ENCODE measurements at regions of chr14 and their contacts with region 1.

Region 1: DNA sequence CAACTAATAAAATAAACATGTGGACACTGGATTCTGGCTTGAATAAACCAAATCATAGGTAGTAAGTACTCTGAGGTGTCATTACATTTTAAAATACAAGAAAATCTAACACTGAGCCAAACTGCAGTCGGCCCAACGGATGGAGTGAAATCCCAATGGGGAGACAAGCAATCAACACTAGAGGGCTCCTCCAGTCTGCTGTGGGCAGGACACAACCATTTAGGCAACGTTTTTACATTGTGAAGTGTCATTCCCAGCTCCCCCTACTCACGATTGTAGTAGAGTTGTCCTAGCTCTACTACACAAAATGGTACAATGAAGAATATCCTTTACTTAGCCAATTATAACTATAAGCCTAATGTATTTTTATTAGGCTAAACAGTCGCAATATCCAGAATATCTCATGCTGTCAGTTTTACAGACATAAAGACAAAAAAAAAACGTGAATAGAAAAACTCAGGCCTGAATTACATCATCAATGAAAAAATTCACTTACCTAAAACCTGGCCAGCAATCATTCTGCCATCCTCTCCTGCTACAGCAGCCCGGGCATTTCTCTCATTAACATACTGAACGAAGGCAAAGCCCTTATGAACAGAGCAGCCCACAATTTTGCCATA is 35.7 kb downstream of the HNRNPC start:
- DNase-seq: no peak
- ATAC-seq: peak; percentile 49; the same call in 1 of the 2 replicates
- H3K4me3 ChIP-seq: no peak overlapping the region
- H3K27ac ChIP-seq: no peak overlapping the region
- H3K4me1 ChIP-seq: no peaks in the 10 kb centered on the region
- H3K27me3 ChIP-seq: no peaks in the 10 kb centered on the region
- CTCF ChIP-seq: peak in 2 of 3 experiments; percentile 32 to 33; a peak in 2 of 6 replicates
- POLR2A ChIP-seq: no peak
- RAD21 ChIP-seq: no peak

Region 2: GRCh38 chr14:20652996-20653975 is 580.3 kb before region 1 on chr14:
- CTCF ChIA-PET with region 1: no interaction called
- POLR2A ChIA-PET with region 1: no interaction called
- RAD21 ChIA-PET with region 1: no interaction called
- intact Hi-C with region 1: no loop called
- DNase-seq: peak; percentile 91
- ATAC-seq: peak; percentile 63
- H3K4me3 ChIP-seq: peak overlapping the region; percentile 38 to 42
- H3K27ac ChIP-seq: no peak overlapping the region
- H3K4me1 ChIP-seq: peaks cover 6 to 29% of the 10 kb centered on the region in 2 experiments
- H3K27me3 ChIP-seq: no peaks in the 10 kb centered on the region
- CTCF ChIP-seq: no peak
- POLR2A ChIP-seq: no peak
- RAD21 ChIP-seq: no peak

Region 3: DNA sequence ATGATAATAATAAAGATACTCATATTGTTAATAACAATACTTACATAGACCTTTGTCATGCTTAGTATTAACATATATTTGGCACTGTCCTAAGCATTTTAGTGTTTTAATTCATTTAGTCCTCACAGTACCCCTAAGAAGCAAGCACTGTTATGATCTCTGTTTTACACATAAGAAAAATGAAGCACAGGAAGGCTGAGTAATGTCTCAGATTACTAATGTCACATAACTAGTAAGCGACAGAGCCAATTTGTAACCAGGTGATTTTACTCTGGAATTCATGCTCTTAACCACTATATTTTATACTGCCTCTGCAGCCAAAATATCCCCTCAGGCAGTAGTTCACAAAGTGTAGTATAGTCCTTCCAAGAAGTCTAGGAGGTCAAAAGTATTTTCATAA is 112.5 kb before region 1 on chr14:
- CTCF ChIA-PET with region 1: no interaction called
- POLR2A ChIA-PET with region 1: no interaction called
- RAD21 ChIA-PET with region 1: no interaction called
- intact Hi-C with region 1: no loop called
- DNase-seq: no peak
- ATAC-seq: no peak
- H3K4me3 ChIP-seq: no peak overlapping the region
- H3K27ac ChIP-seq: no peak overlapping the region
- H3K4me1 ChIP-seq: no peaks in the 10 kb centered on the region
- H3K27me3 ChIP-seq: no peaks in the 10 kb centered on the region
- CTCF ChIP-seq: no peak
- POLR2A ChIP-seq: no peak
- RAD21 ChIP-seq: no peak

Region 4: GRCh38 chr14:21211509-21211908 is 22.1 kb before region 1 on chr14:
- CTCF ChIA-PET with region 1: no interaction called
- POLR2A ChIA-PET with region 1: no interaction called
- RAD21 ChIA-PET with region 1: no interaction called
- intact Hi-C with region 1: loop called (anchors 2 kb)
- DNase-seq: no peak
- ATAC-seq: no peak
- H3K4me3 ChIP-seq: no peak overlapping the region
- H3K27ac ChIP-seq: no peak overlapping the region
- H3K4me1 ChIP-seq: no peaks in the 10 kb centered on the region
- H3K27me3 ChIP-seq: no peaks in the 10 kb centered on the region
- CTCF ChIP-seq: no peak
- POLR2A ChIP-seq: no peak
- RAD21 ChIP-seq: no peak

Region 5: GRCh38 chr14:21367582-21368144 is 134.1 kb after region 1 on chr14:
- CTCF ChIA-PET with region 1: no interaction called
- POLR2A ChIA-PET with region 1: no interaction called
- RAD21 ChIA-PET with region 1: no interaction called
- intact Hi-C with region 1: loop called (anchors 10 kb)
- DNase-seq: no peak
- ATAC-seq: no peak
- H3K4me3 ChIP-seq: no peak overlapping the region
- H3K27ac ChIP-seq: no peak overlapping the region
- H3K4me1 ChIP-seq: no peaks in the 10 kb centered on the region
- H3K27me3 ChIP-seq: no peaks in the 10 kb centered on the region
- CTCF ChIP-seq: no peak
- POLR2A ChIP-seq: no peak
- RAD21 ChIP-seq: no peak

Region 6: GRCh38 chr14:21408147-21408546 is 174.6 kb after region 1 on chr14:
- CTCF ChIA-PET with region 1: no interaction called
- POLR2A ChIA-PET with region 1: no interaction called
- RAD21 ChIA-PET with region 1: no interaction called
- intact Hi-C with region 1: loop called (anchors 5 kb)
- DNase-seq: no peak
- ATAC-seq: no peak; the same call in 1 of the 2 replicates
- H3K4me3 ChIP-seq: no peak overlapping the region
- H3K27ac ChIP-seq: no peak overlapping the region
- H3K4me1 ChIP-seq: no peaks in the 10 kb centered on the region
- H3K27me3 ChIP-seq: no peaks in the 10 kb centered on the region
- CTCF ChIP-seq: no peak
- POLR2A ChIP-seq: no peak
- RAD21 ChIP-seq: no peak